Esophagus muscularis mucosa (tissue), 4 donors: ENCODE measurements at regions of chr3 and their contacts with region 1.

Region 1: DNA sequence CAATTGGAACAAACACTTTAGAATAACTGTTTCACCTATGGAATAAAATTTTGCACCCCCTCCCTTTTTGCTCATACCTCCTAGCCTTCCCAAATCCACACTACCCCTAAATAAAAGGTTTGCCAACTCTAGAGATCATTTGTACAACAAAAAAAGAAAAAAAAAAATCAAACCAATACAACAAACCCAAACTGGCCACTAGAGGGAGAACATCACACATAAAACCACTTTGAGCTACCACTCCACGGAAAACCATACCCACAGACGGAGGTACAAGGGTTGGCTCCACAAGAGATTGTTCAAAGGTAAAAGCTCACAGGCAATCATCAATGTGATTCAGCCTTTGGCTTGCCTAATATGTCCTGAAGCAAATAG is 47.6 kb downstream of the SETMAR start:
- DNase-seq: no peak
- H3K4me3 ChIP-seq: peak overlapping the region; percentile 24 to 45 (median 34)
- H3K27ac ChIP-seq: peak overlapping the region; percentile 40 to 70 (median 58)
- H3K4me1 ChIP-seq: peaks cover 4 to 22% (median 15%) of the 10 kb centered on the region in 4 donors
- H3K27me3 ChIP-seq: no peaks in the 10 kb centered on the region
- CTCF ChIP-seq: peak; percentile 68 to 81 (median 75)
- EP300 ChIP-seq: no peak
- POLR2A ChIP-seq: no peak

Region 2: GRCh38 chr3:4466741-4467521 is 116.2 kb after region 1 on chr3 and contains the start of gene SUMF1:
- intact Hi-C with region 1: loop called (anchors 10 kb)
- DNase-seq: no peak
- H3K4me3 ChIP-seq: peak within 1 kb of the TSS; percentile 79 to 97 (median 90)
- H3K27ac ChIP-seq: peak within 1 kb of the TSS; percentile 79 to 86 (median 85)
- H3K4me1 ChIP-seq: peaks cover 14 to 21% (median 16%) of the 10 kb centered on the region in 4 donors
- H3K27me3 ChIP-seq: no peaks in the 10 kb centered on the region
- CTCF ChIP-seq: no peak
- EP300 ChIP-seq: no peak
- POLR2A ChIP-seq: no peak
- total RNA-seq, gene SUMF1: 28.7 to 49.0 (median 41.6) TPM

Region 3: GRCh38 chr3:4588466-4588865 is 237.7 kb after region 1 on chr3:
- intact Hi-C with region 1: no loop called
- DNase-seq: no peak
- H3K4me3 ChIP-seq: no peak overlapping the region
- H3K27ac ChIP-seq: peak overlapping the region; percentile 34 to 65 (median 54)
- H3K4me1 ChIP-seq: peaks cover 41 to 78% (median 56%) of the 10 kb centered on the region in 4 donors
- H3K27me3 ChIP-seq: no peaks in the 10 kb centered on the region
- CTCF ChIP-seq: no peak
- EP300 ChIP-seq: no peak
- POLR2A ChIP-seq: no peak

Region 4: GRCh38 chr3:4633078-4634004 is 282.6 kb after region 1 on chr3:
- intact Hi-C with region 1: loop called (anchors 5 kb)
- DNase-seq: no peak
- H3K4me3 ChIP-seq: no peak overlapping the region
- H3K27ac ChIP-seq: peak overlapping the region in 2 of 4 donors; percentile 36 to 37
- H3K4me1 ChIP-seq: peaks cover 0 to 18% (median 4%) of the 10 kb centered on the region in 4 donors
- H3K27me3 ChIP-seq: no peaks in the 10 kb centered on the region
- CTCF ChIP-seq: peak; percentile 79 to 87 (median 86)
- EP300 ChIP-seq: no peak
- POLR2A ChIP-seq: no peak